ENCODE measurements at regions of chr13 and their contacts with region 1.

Region 1: DNA sequence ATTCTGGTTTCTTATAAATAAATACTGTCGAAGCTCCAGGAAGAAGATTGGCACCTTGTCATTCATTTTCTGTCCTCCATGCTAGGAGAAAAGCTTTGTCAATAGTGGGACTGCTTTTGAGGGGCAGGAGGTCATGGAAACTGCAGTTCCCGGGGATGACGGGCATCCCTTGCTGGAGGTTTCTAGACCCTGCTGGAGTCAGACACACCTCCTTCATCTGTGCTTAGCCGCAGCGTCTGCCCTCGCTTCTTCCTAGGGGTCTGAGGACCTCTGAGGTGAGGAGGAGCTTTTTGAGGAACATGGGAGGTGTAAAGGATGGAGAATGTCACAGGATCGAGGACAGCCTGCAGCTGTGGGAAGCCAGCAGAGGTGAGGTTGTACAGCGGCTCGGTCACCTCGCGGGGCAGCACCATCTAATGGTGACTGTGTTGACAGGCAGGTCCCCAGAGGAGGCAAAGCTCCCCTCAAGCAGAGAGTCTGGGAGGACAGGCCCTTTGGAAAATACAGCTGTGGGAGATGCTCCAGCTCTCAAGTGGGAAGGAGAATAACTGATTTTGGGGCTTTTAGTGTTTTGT is 172.7 kb upstream of the RNF113B start:
- DNase-seq: no peak
- ATAC-seq: no peak
- H3K4me3 ChIP-seq: no peak overlapping the region
- H3K27ac ChIP-seq: no peak overlapping the region
- H3K4me1 ChIP-seq: no peaks in the 10 kb centered on the region
- H3K27me3 ChIP-seq: no peaks in the 10 kb centered on the region
- CTCF ChIP-seq: peak; percentile 9

Region 2: GRCh38 chr13:98549006-98549727 is 199.3 kb after region 1 on chr13:
- intact Hi-C with region 1: no loop called
- DNase-seq: no peak
- ATAC-seq: peak; percentile 25 to 67 (median 52)
- H3K4me3 ChIP-seq: no peak overlapping the region
- H3K27ac ChIP-seq: peak overlapping the region; percentile 1
- H3K4me1 ChIP-seq: peaks cover 31% of the 10 kb centered on the region
- H3K27me3 ChIP-seq: no peaks in the 10 kb centered on the region
- CTCF ChIP-seq: no peak

Region 3: GRCh38 chr13:98821372-98822224 is 471.8 kb after region 1 on chr13:
- intact Hi-C with region 1: loop called in 1 of 2 experiments (anchors 5 kb)
- DNase-seq: no peak
- ATAC-seq: peak in 2 of 4 donors; percentile 58 to 64
- H3K4me3 ChIP-seq: no peak overlapping the region
- H3K27ac ChIP-seq: no peak overlapping the region
- H3K4me1 ChIP-seq: no peaks in the 10 kb centered on the region
- H3K27me3 ChIP-seq: no peaks in the 10 kb centered on the region
- CTCF ChIP-seq: no peak